Activated T-helper 1 cell treated with anti-CD3 and anti-CD28 coated beads, Interleukin-12 subunit alpha, Interleukin-12 subunit beta, Interleukin-2, Interleukin-4 antibody, amounts not matched to agents 30 ng/mL and 10 ng/mL and 1 ng/mL, durations not matched to agents 14 hours and 24 hours and 36 hours (primary cell): ENCODE measurements at regions of chr16 and their contacts with region 1.

Region 1: GRCh38 chr16:57045694-57046381 is 46.5 kb upstream of the CPNE2 start:
- DNase-seq: no peak
- H3K4me3 Mint-ChIP-seq: no peak overlapping the region
- H3K27ac Mint-ChIP-seq: peak overlapping the region; percentile 72
- H3K4me1 Mint-ChIP-seq: peaks cover 29% of the 10 kb centered on the region
- H3K27me3 Mint-ChIP-seq: no peaks in the 10 kb centered on the region

Region 2: GRCh38 chr16:56851671-56852400 is 194.0 kb before region 1 on chr16:
- intact Hi-C with region 1: no loop called
- DNase-seq: no peak
- H3K4me3 Mint-ChIP-seq: no peak overlapping the region
- H3K27ac Mint-ChIP-seq: no peak overlapping the region
- H3K4me1 Mint-ChIP-seq: peaks cover 24% of the 10 kb centered on the region
- H3K27me3 Mint-ChIP-seq: no peaks in the 10 kb centered on the region

Region 3: GRCh38 chr16:56866943-56867830 is 178.7 kb before region 1 on chr16:
- intact Hi-C with region 1: loop called (anchors 10 kb)
- DNase-seq: peak; percentile 24
- H3K4me3 Mint-ChIP-seq: no peak overlapping the region
- H3K27ac Mint-ChIP-seq: no peak overlapping the region
- H3K4me1 Mint-ChIP-seq: peaks cover 22% of the 10 kb centered on the region
- H3K27me3 Mint-ChIP-seq: no peaks in the 10 kb centered on the region

Region 4: GRCh38 chr16:56944954-56945839 is 100.6 kb before region 1 on chr16:
- intact Hi-C with region 1: loop called (anchors 1 kb)
- DNase-seq: no peak
- H3K4me3 Mint-ChIP-seq: peak overlapping the region; percentile 12
- H3K27ac Mint-ChIP-seq: peak overlapping the region; percentile 88
- H3K4me1 Mint-ChIP-seq: peaks cover 50% of the 10 kb centered on the region
- H3K27me3 Mint-ChIP-seq: no peaks in the 10 kb centered on the region

Region 5: GRCh38 chr16:56988948-56989945 is 56.6 kb before region 1 on chr16 and contains the start of gene NLRC5:
- intact Hi-C with region 1: loop called (anchors 1 kb)
- DNase-seq: peak; percentile 89
- H3K4me3 Mint-ChIP-seq: peak within 1 kb of the TSS; percentile 97
- H3K27ac Mint-ChIP-seq: peak within 1 kb of the TSS; percentile 97
- H3K4me1 Mint-ChIP-seq: peaks cover 83% of the 10 kb centered on the region
- H3K27me3 Mint-ChIP-seq: no peaks in the 10 kb centered on the region
- total RNA-seq, gene NLRC5: 164 and 175 TPM in 2 replicates